ENCODE measurements at regions of chr10 and their contacts with region 1.

Region 1: GRCh38 chr10:55476129-55476528 is 675.1 kb upstream of the PCDH15 start:
- ATAC-seq: peak in 2 of 8 experiments; percentile 44 to 72
- H3K4me3 ChIP-seq: no peak overlapping the region
- H3K27ac ChIP-seq: no peak overlapping the region
- H3K4me1 ChIP-seq: no peaks in the 10 kb centered on the region

Region 2: GRCh38 chr10:55287346-55287745 is 188.8 kb before region 1 on chr10:
- in situ Hi-C with region 1: loop called in 1 of 9 experiments (anchors 25 kb)
- ATAC-seq: peak in 3 of 8 experiments; percentile 38 to 41 (median 39)
- H3K4me3 ChIP-seq: no peak overlapping the region
- H3K27ac ChIP-seq: no peak overlapping the region
- H3K4me1 ChIP-seq: no peaks in the 10 kb centered on the region

Region 3: GRCh38 chr10:55813451-55814170 is 337.5 kb after region 1 on chr10:
- in situ Hi-C with region 1: no loop called
- ATAC-seq: no peak
- H3K4me3 ChIP-seq: no peak overlapping the region
- H3K27ac ChIP-seq: no peak overlapping the region
- H3K4me1 ChIP-seq: no peaks in the 10 kb centered on the region

Measured in motor neuron (in vitro differentiated cells).